Activated CD4-positive, alpha-beta T cell treated with anti-CD3 and anti-CD28 coated beads for 36 hours (primary cell): ENCODE measurements at regions of chr3 and their contacts with region 1.

Region 1: DNA sequence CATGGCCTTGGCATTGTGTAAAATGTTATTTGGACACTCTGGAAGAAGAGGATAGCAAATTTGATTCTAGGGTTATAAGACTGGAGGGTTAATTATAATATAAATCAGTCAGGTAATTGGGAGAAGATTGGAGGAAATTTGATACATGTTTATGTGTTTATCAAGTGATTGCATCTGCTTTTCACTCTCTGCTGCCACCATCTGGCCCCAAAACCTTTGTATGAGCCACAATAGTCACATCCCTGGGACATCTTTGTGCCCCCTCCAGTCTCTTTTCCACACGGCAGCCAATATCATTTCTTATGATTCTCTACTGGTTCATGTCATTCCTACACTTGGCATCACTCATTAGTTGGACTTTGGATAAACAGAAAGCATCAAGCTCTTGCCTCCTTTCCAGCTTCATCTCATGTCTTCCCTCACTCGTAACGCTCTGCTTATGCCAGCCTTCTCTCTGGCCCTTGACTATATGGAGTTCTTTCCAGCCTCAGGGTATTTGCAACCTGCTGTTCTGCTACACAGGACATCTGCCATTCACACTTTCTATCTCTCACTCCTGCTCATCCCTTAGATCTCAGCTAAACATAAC is 602.3 kb upstream of the SUCLG2 start:
- DNase-seq: peak; percentile 47
- ATAC-seq: no peak
- H3K4me3 Mint-ChIP-seq: no peak overlapping the region
- H3K27ac Mint-ChIP-seq: no peak overlapping the region
- H3K4me1 Mint-ChIP-seq: no peaks in the 10 kb centered on the region
- H3K27me3 Mint-ChIP-seq: peaks cover 3% of the 10 kb centered on the region

Region 2: GRCh38 chr3:67819447-67819846 is 437.3 kb before region 1 on chr3:
- CTCF ChIA-PET with region 1: no interaction called
- POLR2A ChIA-PET with region 1: no interaction called
- intact Hi-C with region 1: loop called in 1 of 2 experiments (anchors 2 kb)
- DNase-seq: peak; percentile 7
- ATAC-seq: no peak
- H3K4me3 Mint-ChIP-seq: no peak overlapping the region
- H3K27ac Mint-ChIP-seq: no peak overlapping the region
- H3K4me1 Mint-ChIP-seq: no peaks in the 10 kb centered on the region
- H3K27me3 Mint-ChIP-seq: no peaks in the 10 kb centered on the region

Region 3: GRCh38 chr3:67964596-67964995 is 292.1 kb before region 1 on chr3:
- CTCF ChIA-PET with region 1: no interaction called
- POLR2A ChIA-PET with region 1: no interaction called
- intact Hi-C with region 1: no loop called
- DNase-seq: no peak
- ATAC-seq: no peak
- H3K4me3 Mint-ChIP-seq: no peak overlapping the region
- H3K27ac Mint-ChIP-seq: no peak overlapping the region
- H3K4me1 Mint-ChIP-seq: no peaks in the 10 kb centered on the region
- H3K27me3 Mint-ChIP-seq: no peaks in the 10 kb centered on the region

Region 4: DNA sequence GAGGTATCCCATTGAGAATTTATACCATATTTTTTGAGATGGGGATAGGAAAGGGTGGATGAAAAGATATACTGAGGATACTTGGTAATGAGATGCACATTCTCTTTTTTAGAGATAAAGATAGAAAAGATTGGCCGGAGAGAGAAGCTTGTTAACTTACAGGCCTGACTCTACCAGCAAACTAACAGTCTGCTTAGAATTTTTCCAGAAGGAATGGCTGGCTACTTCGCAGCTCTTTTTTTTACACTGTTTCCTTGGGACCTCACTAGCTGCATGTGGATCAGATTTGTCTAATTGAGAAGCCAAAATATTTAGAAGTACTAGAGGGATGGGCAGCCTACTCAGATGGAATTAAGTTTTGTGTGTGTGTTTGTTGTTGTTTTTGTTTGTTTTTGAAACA is 89.1 kb after region 1 on chr3:
- CTCF ChIA-PET with region 1: no interaction called
- POLR2A ChIA-PET with region 1: no interaction called
- intact Hi-C with region 1: no loop called
- DNase-seq: no peak
- ATAC-seq: no peak
- H3K4me3 Mint-ChIP-seq: no peak overlapping the region
- H3K27ac Mint-ChIP-seq: no peak overlapping the region
- H3K4me1 Mint-ChIP-seq: no peaks in the 10 kb centered on the region
- H3K27me3 Mint-ChIP-seq: no peaks in the 10 kb centered on the region